ENCODE measurements at regions of chr17 and their contacts with region 1.

Region 1: GRCh38 chr17:4939796-4940624 is at the starts of genes RNF167 and SLC25A11:
- DNase-seq: peak; percentile 84 to 97 (median 94)
- H3K4me3 ChIP-seq: peak within 1 kb of the TSS; percentile 58 to 100 (median 93)
- H3K27ac ChIP-seq: peak within 1 kb of the TSS; percentile 87 to 100 (median 98)
- H3K27me3 ChIP-seq: no peaks in the 10 kb centered on the region
- CTCF ChIP-seq: peak in 31 of 56 donors; percentile 1 to 56 (median 25)
- total RNA-seq, gene RNF167: 65.3 to 121 (median 91.1) TPM
- total RNA-seq, gene SLC25A11: 56.8 to 113 (median 82.2) TPM

Region 2: DNA sequence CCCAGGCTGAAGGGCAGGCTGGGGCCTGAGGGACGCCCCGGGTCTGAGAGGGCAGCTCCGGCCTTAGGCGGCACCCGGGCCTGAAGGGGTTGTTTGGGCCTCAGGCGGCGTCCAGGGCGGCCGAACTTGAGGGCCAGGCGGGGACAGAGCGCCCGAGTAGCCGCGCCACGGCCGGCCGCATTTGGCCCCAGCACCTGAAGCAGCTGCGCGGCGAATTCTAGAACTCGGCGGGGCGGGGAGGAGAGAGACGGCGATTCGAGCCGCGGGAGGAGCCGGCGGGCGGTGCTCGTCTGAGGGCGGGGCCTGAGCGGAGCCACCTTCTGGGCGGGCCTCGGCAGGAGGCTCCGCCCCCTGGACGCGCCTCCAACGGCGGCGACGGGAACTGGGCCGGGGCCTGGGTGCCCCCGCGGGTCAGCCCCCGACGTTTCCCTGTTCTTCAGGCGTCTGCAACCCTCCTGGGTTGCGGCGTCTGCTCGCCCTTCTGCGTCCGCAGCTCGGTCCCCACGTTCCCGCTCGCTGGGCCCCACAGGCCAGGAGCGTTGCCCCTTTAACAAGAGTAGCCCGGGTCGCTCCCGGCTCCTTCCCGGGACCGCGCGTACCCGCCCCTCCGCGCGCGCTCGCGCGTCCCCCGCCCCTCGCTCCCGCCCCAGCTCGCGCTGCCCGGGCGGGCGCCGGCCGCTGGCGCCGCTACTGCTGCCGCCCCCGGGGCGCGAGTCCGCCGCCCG is 57.5 kb after region 1 on chr17 and contains the starts of genes INCA1 and KIF1C:
- intact Hi-C with region 1: loop called in 1 of 2 experiments (anchors 2 kb)
- DNase-seq: peak; percentile 85 to 97 (median 92)
- H3K4me3 ChIP-seq: peak within 1 kb of the TSS; percentile 65 to 99 (median 93)
- H3K27ac ChIP-seq: peak within 1 kb of the TSS; percentile 81 to 99 (median 95)
- H3K27me3 ChIP-seq: no peaks in the 10 kb centered on the region
- CTCF ChIP-seq: peak in 48 of 56 donors; percentile 8 to 68 (median 41)
- total RNA-seq, gene INCA1: 0.36 to 3.7 (median 2.0) TPM in 118 of 120 experiments, not detected in the others
- total RNA-seq, gene KIF1C: 62.4 to 504 (median 132) TPM

Measured in dorsolateral prefrontal cortex (tissue), 120 donors.